ENCODE measurements at regions of chr7 and their contacts with region 1.

Region 1: GRCh38 chr7:76314042-76314721 is 11.7 kb downstream of the HSPB1 start:
- DNase-seq: peak; percentile 79
- H3K4me3 ChIP-seq: no peak overlapping the region
- H3K27ac ChIP-seq: no peak overlapping the region
- H3K4me1 ChIP-seq: peaks cover 24% of the 10 kb centered on the region
- H3K27me3 ChIP-seq: no peaks in the 10 kb centered on the region
- CTCF ChIP-seq: peak; percentile 96 to 100

Region 2: GRCh38 chr7:76179686-76180085 is 134.5 kb before region 1 on chr7:
- CTCF ChIA-PET with region 1: no interaction called
- dilution Hi-C with region 1: no loop called
- in situ Hi-C with region 1: loop called (anchors 5 kb)
- intact Hi-C with region 1: loop called (anchors 1 kb)
- DNase-seq: no peak
- H3K4me3 ChIP-seq: no peak overlapping the region
- H3K27ac ChIP-seq: no peak overlapping the region
- H3K4me1 ChIP-seq: peaks cover 3% of the 10 kb centered on the region
- H3K27me3 ChIP-seq: no peaks in the 10 kb centered on the region
- CTCF ChIP-seq: no peak

Region 3: GRCh38 chr7:76220185-76221057 is 93.8 kb before region 1 on chr7:
- CTCF ChIA-PET with region 1: no interaction called
- dilution Hi-C with region 1: loop called (anchors 5 kb)
- in situ Hi-C with region 1: no loop called
- intact Hi-C with region 1: loop called (anchors 2 kb)
- DNase-seq: peak; percentile 24
- H3K4me3 ChIP-seq: no peak overlapping the region
- H3K27ac ChIP-seq: no peak overlapping the region
- H3K4me1 ChIP-seq: peaks cover 6% of the 10 kb centered on the region
- H3K27me3 ChIP-seq: no peaks in the 10 kb centered on the region
- CTCF ChIP-seq: peak in 1 of 2 donors; percentile 7

Measured in mammary epithelial cell (primary cell).